ENCODE measurements at regions of chr19 and their contacts with region 1.

Region 1: DNA sequence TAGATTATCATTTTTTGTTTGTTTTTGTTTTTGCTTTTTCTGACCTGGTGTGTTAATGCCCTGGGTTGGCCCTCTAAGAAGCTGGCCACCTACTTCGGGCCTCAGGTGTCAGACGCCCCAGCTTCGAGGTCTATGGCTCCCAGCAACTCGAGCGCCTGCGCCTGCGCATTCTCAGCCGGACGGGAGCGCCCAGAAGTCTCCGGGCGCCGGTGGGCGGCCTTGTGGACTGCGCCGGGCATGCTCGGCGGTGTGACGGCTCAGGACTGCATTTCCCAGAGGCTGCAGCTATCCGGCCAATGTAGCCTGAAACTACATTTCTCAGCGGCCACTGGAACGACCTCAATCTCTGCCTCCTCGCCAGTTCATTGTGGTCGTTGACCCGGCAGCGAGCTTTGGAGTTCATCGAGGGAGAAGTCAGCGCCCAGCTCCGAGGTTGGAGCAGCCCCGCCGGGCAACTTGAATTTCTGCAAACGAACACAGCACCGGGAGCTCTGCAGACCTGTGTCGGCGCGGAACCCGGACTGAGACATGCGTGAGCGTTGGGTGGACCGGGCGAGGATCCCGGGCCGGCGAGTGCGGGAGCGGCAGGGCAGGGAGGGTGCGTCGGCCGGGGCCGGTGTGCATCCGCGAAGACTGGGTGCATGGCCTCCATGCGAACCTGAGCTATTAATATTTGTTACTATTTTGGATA is at the start of gene ZNF30:
- DNase-seq: peak; percentile 87
- ATAC-seq: peak; percentile 98
- H3K4me3 ChIP-seq: peak within 1 kb of the TSS; percentile 56 to 87 (median 76)
- H3K4me3 Mint-ChIP-seq: peak within 1 kb of the TSS; percentile 94
- H3K27ac ChIP-seq: peak within 1 kb of the TSS; percentile 34 to 56
- H3K27ac Mint-ChIP-seq: peak within 1 kb of the TSS; percentile 72
- H3K4me1 ChIP-seq: peaks cover 6 to 10% of the 10 kb centered on the region in 2 donors
- H3K4me1 Mint-ChIP-seq: peaks cover 11% of the 10 kb centered on the region
- H3K27me3 ChIP-seq: no peaks in the 10 kb centered on the region
- H3K27me3 Mint-ChIP-seq: peaks cover 10% of the 10 kb centered on the region
- CTCF ChIP-seq: no peak
- total RNA-seq, gene ZNF30: 3.3 and 5.1 TPM in 2 replicates

Region 2: GRCh38 chr19:34677386-34678084 is 249.3 kb before region 1 on chr19 and contains the start of gene ZNF302:
- CTCF ChIA-PET with region 1: no interaction called
- POLR2A ChIA-PET with region 1: no interaction called
- intact Hi-C with region 1: loop called (anchors 1 kb)
- DNase-seq: peak; percentile 97
- ATAC-seq: peak; percentile 89
- H3K4me3 ChIP-seq: peak within 1 kb of the TSS; percentile 83 to 95 (median 91)
- H3K4me3 Mint-ChIP-seq: peak within 1 kb of the TSS; percentile 98
- H3K27ac ChIP-seq: peak within 1 kb of the TSS; percentile 87 to 90
- H3K27ac Mint-ChIP-seq: peak within 1 kb of the TSS; percentile 98
- H3K4me1 ChIP-seq: peaks cover 13 to 17% of the 10 kb centered on the region in 2 donors
- H3K4me1 Mint-ChIP-seq: peaks cover 25% of the 10 kb centered on the region
- H3K27me3 ChIP-seq: peaks cover 0 to 16% (median 0%) of the 10 kb centered on the region in 4 experiments
- H3K27me3 Mint-ChIP-seq: peaks cover 14% of the 10 kb centered on the region
- CTCF ChIP-seq: no peak
- total RNA-seq, gene ZNF302: 48.4 and 51.6 TPM in 2 replicates

Region 3: GRCh38 chr19:34772697-34773554 is 153.9 kb before region 1 on chr19 and contains the start of gene ZNF599:
- CTCF ChIA-PET with region 1: no interaction called
- POLR2A ChIA-PET with region 1: no interaction called
- intact Hi-C with region 1: loop called (anchors 1 kb)
- DNase-seq: peak; percentile 93
- ATAC-seq: peak; percentile 98
- H3K4me3 ChIP-seq: peak within 1 kb of the TSS; percentile 69 to 79 (median 73)
- H3K4me3 Mint-ChIP-seq: peak within 1 kb of the TSS; percentile 98
- H3K27ac ChIP-seq: peak within 1 kb of the TSS; percentile 50 to 74
- H3K27ac Mint-ChIP-seq: peak within 1 kb of the TSS; percentile 96
- H3K4me1 ChIP-seq: peaks cover 8 to 9% of the 10 kb centered on the region in 2 donors
- H3K4me1 Mint-ChIP-seq: peaks cover 19% of the 10 kb centered on the region
- H3K27me3 ChIP-seq: peaks cover 0 to 9% (median 2%) of the 10 kb centered on the region in 4 experiments
- H3K27me3 Mint-ChIP-seq: peaks cover 25% of the 10 kb centered on the region
- CTCF ChIP-seq: no peak
- total RNA-seq, gene ZNF599: 7.6 and 8.1 TPM in 2 replicates

Measured in B cell (primary cell).